GM10248 (cell line): ENCODE measurements at regions of chr4 and their contacts with region 1.

Region 1: GRCh38 chr4:176340871-176341685 is 21.3 kb downstream of the SPCS3 start:
- DNase-seq: peak; percentile 28
- CTCF ChIP-seq: peak; percentile 48

Region 2: GRCh38 chr4:175935016-175935661 is 405.9 kb before region 1 on chr4:
- CTCF ChIA-PET with region 1: no interaction called
- POLR2A ChIA-PET with region 1: no interaction called
- DNase-seq: no peak
- CTCF ChIP-seq: no peak

Region 3: DNA sequence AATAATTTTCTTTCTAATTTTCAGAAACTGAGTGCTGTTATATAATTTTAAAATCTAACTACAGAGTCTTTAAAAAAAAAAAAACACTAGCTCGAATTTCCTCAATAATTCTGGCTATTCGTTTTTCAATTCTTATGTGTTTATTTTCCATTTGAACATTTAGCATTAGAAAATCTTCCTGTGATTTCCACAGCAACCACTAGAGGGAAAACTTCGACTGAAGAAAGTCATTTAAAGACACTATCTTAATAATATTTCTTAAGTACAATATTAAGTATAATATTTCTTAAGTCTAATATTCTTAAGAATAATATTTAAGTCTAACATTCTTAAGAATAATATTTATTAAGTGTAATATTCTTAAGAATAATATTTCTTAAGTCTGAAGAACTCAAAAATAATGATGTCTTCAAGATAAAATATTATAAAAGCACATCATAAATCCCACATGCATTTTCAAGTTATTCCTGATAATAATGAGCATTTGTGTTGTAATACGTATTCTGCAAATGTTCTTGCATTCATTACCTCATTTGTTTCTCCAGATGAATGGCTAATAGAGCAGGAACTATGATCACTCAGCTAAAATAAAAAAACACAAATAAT is 393.9 kb before region 1 on chr4:
- CTCF ChIA-PET with region 1: interaction called, 19 read pairs
- POLR2A ChIA-PET with region 1: no interaction called
- DNase-seq: no peak
- CTCF ChIP-seq: peak; percentile 60

Region 4: GRCh38 chr4:175953960-175954521 is 387.0 kb before region 1 on chr4:
- CTCF ChIA-PET with region 1: interaction called, 12 read pairs
- POLR2A ChIA-PET with region 1: no interaction called
- DNase-seq: peak; percentile 27
- CTCF ChIP-seq: peak; percentile 31

Region 5: DNA sequence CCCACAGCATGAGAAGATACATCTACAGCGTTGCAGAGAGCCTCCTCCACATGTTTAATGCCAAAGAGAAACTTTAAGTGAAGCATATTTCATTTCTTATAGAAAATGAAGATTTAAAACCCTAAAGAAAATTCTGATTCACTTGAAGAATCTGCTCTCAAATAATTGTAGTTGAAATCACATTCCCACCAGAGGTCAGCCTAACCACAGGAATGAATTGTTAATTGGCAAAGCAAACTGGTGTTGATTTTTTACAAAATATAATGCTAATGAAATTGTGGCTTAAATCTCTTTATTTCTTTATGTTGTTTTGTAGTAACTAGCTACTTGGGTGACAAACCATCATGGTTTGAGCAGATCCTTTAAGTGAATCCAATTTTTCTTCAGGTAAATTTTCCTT is 306.6 kb before region 1 on chr4:
- CTCF ChIA-PET with region 1: interaction called, 17 read pairs
- POLR2A ChIA-PET with region 1: no interaction called
- DNase-seq: no peak
- CTCF ChIP-seq: peak; percentile 13

Region 6: GRCh38 chr4:176150356-176150682 is 190.8 kb before region 1 on chr4:
- CTCF ChIA-PET with region 1: interaction called, 14 read pairs
- POLR2A ChIA-PET with region 1: no interaction called
- DNase-seq: peak; percentile 8
- CTCF ChIP-seq: no peak

Region 7: GRCh38 chr4:176323511-176324160 is 17.4 kb before region 1 on chr4:
- CTCF ChIA-PET with region 1: interaction called, 39 read pairs
- POLR2A ChIA-PET with region 1: no interaction called
- DNase-seq: no peak
- CTCF ChIP-seq: no peak

Region 8: GRCh38 chr4:176548571-176548970 is 207.5 kb after region 1 on chr4:
- CTCF ChIA-PET with region 1: no interaction called
- POLR2A ChIA-PET with region 1: no interaction called
- DNase-seq: no peak
- CTCF ChIP-seq: no peak